ENCODE measurements at regions of chr7 and their contacts with region 1.

Region 1: GRCh38 chr7:7681179-7681935 is 37.0 kb downstream of the RPA3 start:
- DNase-seq: peak in 6 of 9 experiments; percentile 6 to 76 (median 41)
- ATAC-seq: peak; percentile 84
- H3K4me3 ChIP-seq: no peak overlapping the region
- H3K4me3 Mint-ChIP-seq: no peak overlapping the region
- H3K27ac ChIP-seq: peak overlapping the region in 1 of 2 experiments; percentile 2
- H3K27ac Mint-ChIP-seq: peak overlapping the region; percentile 70
- H3K4me1 ChIP-seq: peaks cover 14% of the 10 kb centered on the region
- H3K4me1 Mint-ChIP-seq: peaks cover 36% of the 10 kb centered on the region
- H3K27me3 ChIP-seq: no peaks in the 10 kb centered on the region
- H3K27me3 Mint-ChIP-seq: no peaks in the 10 kb centered on the region
- CTCF ChIP-seq: peak; percentile 81

Region 2: GRCh38 chr7:7595451-7595850 is 85.9 kb before region 1 on chr7:
- CTCF ChIA-PET with region 1: interaction called, 4 read pairs
- POLR2A ChIA-PET with region 1: no interaction called
- intact Hi-C with region 1: loop called in 1 of 2 experiments (anchors 5 kb)
- DNase-seq: peak in 2 of 9 experiments; percentile 39 to 57
- ATAC-seq: peak; percentile 52
- H3K4me3 ChIP-seq: no peak overlapping the region
- H3K4me3 Mint-ChIP-seq: no peak overlapping the region
- H3K27ac ChIP-seq: no peak overlapping the region
- H3K27ac Mint-ChIP-seq: no peak overlapping the region
- H3K4me1 ChIP-seq: no peaks in the 10 kb centered on the region
- H3K4me1 Mint-ChIP-seq: peaks cover 2% of the 10 kb centered on the region
- H3K27me3 ChIP-seq: no peaks in the 10 kb centered on the region
- H3K27me3 Mint-ChIP-seq: no peaks in the 10 kb centered on the region
- CTCF ChIP-seq: peak; percentile 69

Region 3: DNA sequence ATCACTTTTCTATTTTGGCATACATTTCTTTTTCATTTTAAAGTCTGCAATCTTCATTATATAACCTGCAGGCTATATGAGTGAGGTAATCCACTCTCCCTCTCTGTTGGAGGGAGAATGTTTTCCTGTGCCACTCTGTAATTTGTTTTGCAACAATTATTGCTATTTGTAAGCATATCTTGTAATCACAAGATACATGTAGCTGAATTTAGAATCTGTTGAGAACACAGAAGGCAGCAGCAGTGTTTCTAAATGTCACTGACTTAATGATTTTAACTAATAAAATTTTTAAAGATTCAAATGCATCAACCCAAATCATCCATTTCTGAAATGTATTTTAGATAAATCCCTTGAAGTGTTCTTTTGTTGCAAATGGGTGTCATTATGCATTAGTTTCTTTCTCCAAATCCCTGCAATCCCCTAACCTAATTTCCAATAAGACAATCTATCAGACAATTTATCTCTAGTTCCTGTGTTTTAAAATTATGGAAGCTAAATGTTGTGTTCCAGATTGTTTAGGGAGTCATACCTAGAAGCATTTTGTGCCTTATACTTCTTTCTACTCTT is 60.6 kb before region 1 on chr7:
- CTCF ChIA-PET with region 1: no interaction called
- POLR2A ChIA-PET with region 1: no interaction called
- intact Hi-C with region 1: no loop called
- DNase-seq: no peak
- ATAC-seq: no peak
- H3K4me3 ChIP-seq: no peak overlapping the region
- H3K4me3 Mint-ChIP-seq: no peak overlapping the region
- H3K27ac ChIP-seq: no peak overlapping the region
- H3K27ac Mint-ChIP-seq: no peak overlapping the region
- H3K4me1 ChIP-seq: no peaks in the 10 kb centered on the region
- H3K4me1 Mint-ChIP-seq: peaks cover 5% of the 10 kb centered on the region
- H3K27me3 ChIP-seq: no peaks in the 10 kb centered on the region
- H3K27me3 Mint-ChIP-seq: no peaks in the 10 kb centered on the region
- CTCF ChIP-seq: no peak

Region 4: DNA sequence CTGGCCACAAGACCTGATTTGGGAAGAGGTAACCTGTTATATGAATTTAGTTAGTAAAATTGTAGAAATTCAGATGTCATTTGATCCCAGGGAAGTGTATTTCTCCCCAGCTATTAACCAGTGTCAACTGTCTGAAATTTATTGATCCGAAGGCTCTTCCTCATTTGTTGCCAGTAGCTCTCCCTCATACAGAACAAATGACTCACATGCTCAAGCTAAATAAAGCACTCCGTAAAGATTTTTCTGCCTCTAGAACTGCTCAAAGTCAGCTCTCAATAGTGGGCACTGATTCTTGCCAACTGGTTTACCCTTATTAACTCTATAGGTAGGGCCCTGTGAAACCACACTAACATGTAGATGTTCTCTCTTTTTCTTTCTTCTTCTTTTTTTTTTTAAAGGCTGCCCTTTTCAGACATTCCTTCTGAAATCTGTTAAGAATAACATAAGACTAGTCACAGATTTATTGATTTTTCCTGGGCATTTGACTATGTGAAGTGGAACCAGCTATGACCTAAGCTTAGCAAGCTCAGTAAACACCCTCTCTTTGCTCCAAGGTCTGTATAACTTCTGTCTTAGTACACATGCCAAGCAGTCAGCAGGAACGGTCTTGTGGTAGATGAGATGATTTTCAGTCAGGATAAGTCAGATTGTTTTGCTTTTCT is 15.2 kb after region 1 on chr7:
- CTCF ChIA-PET with region 1: interaction called, 11 read pairs
- POLR2A ChIA-PET with region 1: no interaction called
- intact Hi-C with region 1: no loop called
- DNase-seq: no peak
- ATAC-seq: no peak
- H3K4me3 ChIP-seq: no peak overlapping the region
- H3K4me3 Mint-ChIP-seq: no peak overlapping the region
- H3K27ac ChIP-seq: no peak overlapping the region
- H3K27ac Mint-ChIP-seq: no peak overlapping the region
- H3K4me1 ChIP-seq: peaks cover 3% of the 10 kb centered on the region
- H3K4me1 Mint-ChIP-seq: peaks cover 29% of the 10 kb centered on the region
- H3K27me3 ChIP-seq: no peaks in the 10 kb centered on the region
- H3K27me3 Mint-ChIP-seq: no peaks in the 10 kb centered on the region
- CTCF ChIP-seq: no peak

Region 5: GRCh38 chr7:7707806-7708205 is 26.4 kb after region 1 on chr7:
- CTCF ChIA-PET with region 1: no interaction called
- POLR2A ChIA-PET with region 1: no interaction called
- intact Hi-C with region 1: no loop called
- DNase-seq: no peak
- ATAC-seq: no peak
- H3K4me3 ChIP-seq: no peak overlapping the region
- H3K4me3 Mint-ChIP-seq: no peak overlapping the region
- H3K27ac ChIP-seq: no peak overlapping the region
- H3K27ac Mint-ChIP-seq: no peak overlapping the region
- H3K4me1 ChIP-seq: no peaks in the 10 kb centered on the region
- H3K4me1 Mint-ChIP-seq: peaks cover 25% of the 10 kb centered on the region
- H3K27me3 ChIP-seq: no peaks in the 10 kb centered on the region
- H3K27me3 Mint-ChIP-seq: no peaks in the 10 kb centered on the region
- CTCF ChIP-seq: no peak

Region 6: DNA sequence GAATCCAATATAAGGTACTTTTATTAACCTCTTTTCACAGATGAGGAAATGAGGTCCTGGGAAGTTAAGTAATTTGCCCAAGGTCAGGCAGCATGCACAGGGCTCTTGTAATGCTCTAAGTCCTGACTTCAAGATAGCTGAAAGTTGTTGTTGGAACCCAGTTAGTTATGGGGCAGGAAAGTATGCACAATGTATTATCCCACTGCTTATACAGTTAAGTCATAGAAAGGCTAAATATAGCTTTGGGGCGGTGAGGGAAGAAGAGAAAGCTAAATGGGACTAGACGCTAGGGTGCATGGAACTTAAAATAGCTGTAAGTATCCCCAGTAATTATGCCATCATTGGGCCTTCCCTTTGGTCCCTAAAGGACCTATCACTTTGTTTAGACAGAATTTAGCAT is 296.4 kb after region 1 on chr7:
- CTCF ChIA-PET with region 1: no interaction called
- POLR2A ChIA-PET with region 1: no interaction called
- intact Hi-C with region 1: loop called in 1 of 2 experiments (anchors 5 kb)
- DNase-seq: no peak
- ATAC-seq: no peak
- H3K4me3 ChIP-seq: no peak overlapping the region
- H3K4me3 Mint-ChIP-seq: no peak overlapping the region
- H3K27ac ChIP-seq: peak overlapping the region in 1 of 2 experiments; percentile 38
- H3K27ac Mint-ChIP-seq: no peak overlapping the region
- H3K4me1 ChIP-seq: peaks cover 27% of the 10 kb centered on the region
- H3K4me1 Mint-ChIP-seq: peaks cover 78% of the 10 kb centered on the region
- H3K27me3 ChIP-seq: no peaks in the 10 kb centered on the region
- H3K27me3 Mint-ChIP-seq: no peaks in the 10 kb centered on the region
- CTCF ChIP-seq: no peak

Region 7: DNA sequence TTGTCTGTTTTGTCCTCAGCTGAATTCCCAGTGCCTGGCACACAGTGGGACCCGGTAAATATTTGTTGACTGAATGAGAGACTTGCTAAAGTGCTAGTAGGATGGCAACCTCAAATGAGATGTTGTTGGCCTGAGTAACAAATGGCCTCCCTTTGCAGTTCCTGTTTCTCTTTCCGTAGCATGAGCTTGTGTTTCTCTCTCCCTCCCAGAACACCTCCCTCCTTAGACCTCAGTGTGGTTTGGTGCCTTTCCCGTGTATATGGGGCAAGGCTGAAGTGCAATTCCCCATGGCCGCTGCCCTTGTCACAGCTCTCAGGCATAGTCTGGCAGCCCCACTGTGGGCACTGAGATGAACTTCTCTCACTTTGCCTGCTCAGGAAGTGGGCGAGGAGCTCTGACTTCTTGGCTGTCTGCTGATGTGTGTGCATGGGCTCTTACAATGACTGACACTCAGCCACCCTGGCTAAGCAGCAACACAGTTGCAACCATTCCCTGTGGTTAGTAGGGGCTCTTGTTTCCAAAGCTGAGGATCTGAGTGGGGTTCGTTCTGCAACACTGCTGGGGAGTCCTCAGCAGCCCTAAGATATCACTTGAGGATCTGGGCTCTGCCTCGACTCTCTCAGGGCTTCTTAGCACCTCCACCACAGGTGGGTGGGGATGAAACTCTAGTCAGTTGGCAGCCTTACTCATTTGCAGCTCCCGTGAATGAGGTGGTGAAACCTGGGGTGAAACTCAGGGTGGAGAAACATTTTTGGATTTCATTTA is 444.5 kb after region 1 on chr7:
- CTCF ChIA-PET with region 1: interaction called, 5 read pairs
- POLR2A ChIA-PET with region 1: interaction called, 3 read pairs
- intact Hi-C with region 1: loop called in 1 of 2 experiments (anchors 5 kb)
- DNase-seq: peak; percentile 67 to 96 (median 81)
- ATAC-seq: peak; percentile 91
- H3K4me3 ChIP-seq: peak overlapping the region in 1 of 2 experiments; percentile 3
- H3K4me3 Mint-ChIP-seq: peak overlapping the region; percentile 33
- H3K27ac ChIP-seq: peak overlapping the region; percentile 60 to 65
- H3K27ac Mint-ChIP-seq: peak overlapping the region; percentile 97
- H3K4me1 ChIP-seq: peaks cover 61% of the 10 kb centered on the region
- H3K4me1 Mint-ChIP-seq: peaks cover 85% of the 10 kb centered on the region
- H3K27me3 ChIP-seq: no peaks in the 10 kb centered on the region
- H3K27me3 Mint-ChIP-seq: no peaks in the 10 kb centered on the region
- CTCF ChIP-seq: no peak

Region 8: GRCh38 chr7:8217200-8218068 is 536.1 kb after region 1 on chr7:
- CTCF ChIA-PET with region 1: interaction called, 55 read pairs
- POLR2A ChIA-PET with region 1: no interaction called
- intact Hi-C with region 1: loop called (anchors 1 kb)
- DNase-seq: peak in 3 of 9 experiments; percentile 55 to 81 (median 74)
- ATAC-seq: peak; percentile 58
- H3K4me3 ChIP-seq: no peak overlapping the region
- H3K4me3 Mint-ChIP-seq: no peak overlapping the region
- H3K27ac ChIP-seq: no peak overlapping the region
- H3K27ac Mint-ChIP-seq: no peak overlapping the region
- H3K4me1 ChIP-seq: no peaks in the 10 kb centered on the region
- H3K4me1 Mint-ChIP-seq: peaks cover 3% of the 10 kb centered on the region
- H3K27me3 ChIP-seq: no peaks in the 10 kb centered on the region
- H3K27me3 Mint-ChIP-seq: no peaks in the 10 kb centered on the region
- CTCF ChIP-seq: peak; percentile 79